IMR-90 (cell line): ENCODE measurements at regions of chr7 and their contacts with region 1.

Region 1: GRCh38 chr7:6340241-6340640 is 67.8 kb upstream of the CYTH3 start:
- DNase-seq: no peak
- ATAC-seq: no peak
- H3K4me3 ChIP-seq: no peak overlapping the region
- H3K27ac ChIP-seq: no peak overlapping the region
- H3K4me1 ChIP-seq: no peaks in the 10 kb centered on the region
- H3K27me3 ChIP-seq: no peaks in the 10 kb centered on the region
- CTCF ChIP-seq: no peak
- POLR2A ChIP-seq: no peak
- RAD21 ChIP-seq: no peak

Region 2: GRCh38 chr7:6260291-6261187 is 79.7 kb before region 1 on chr7:
- CTCF ChIA-PET with region 1: no interaction called
- POLR2A ChIA-PET with region 1: no interaction called
- dilution Hi-C with region 1: no loop called
- in situ Hi-C with region 1: no loop called
- intact Hi-C with region 1: no loop called
- DNase-seq: no peak
- ATAC-seq: peak; percentile 25
- H3K4me3 ChIP-seq: no peak overlapping the region
- H3K27ac ChIP-seq: peak overlapping the region; percentile 58; the same call in 1 of the 2 replicates
- H3K4me1 ChIP-seq: peaks cover 20% of the 10 kb centered on the region
- H3K27me3 ChIP-seq: no peaks in the 10 kb centered on the region
- CTCF ChIP-seq: no peak
- POLR2A ChIP-seq: no peak
- RAD21 ChIP-seq: no peak

Region 3: DNA sequence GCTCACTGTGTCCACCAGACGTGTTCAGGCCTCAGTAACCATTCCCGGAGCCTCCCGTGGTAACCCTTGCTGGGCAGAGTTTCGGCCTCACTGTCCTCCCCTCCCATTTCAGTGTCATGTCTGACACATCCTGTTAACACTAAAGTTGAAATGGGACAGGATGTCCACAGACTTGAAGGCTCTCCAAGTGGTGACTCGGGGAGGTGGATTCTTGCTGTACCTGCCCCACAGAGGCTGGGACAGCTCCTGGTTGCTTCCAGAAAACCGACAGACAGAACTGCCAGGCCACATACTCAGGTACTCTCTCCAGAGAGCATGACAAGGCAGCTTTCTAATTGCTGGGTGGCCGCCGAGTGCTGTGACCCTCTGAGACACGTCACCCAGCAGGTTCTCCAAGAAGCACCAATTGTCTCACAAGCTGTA is 49.9 kb before region 1 on chr7:
- CTCF ChIA-PET with region 1: no interaction called
- POLR2A ChIA-PET with region 1: no interaction called
- dilution Hi-C with region 1: no loop called
- in situ Hi-C with region 1: no loop called
- intact Hi-C with region 1: no loop called
- DNase-seq: peak; percentile 18
- ATAC-seq: peak; percentile 37; the same call in 1 of the 2 replicates
- H3K4me3 ChIP-seq: no peak overlapping the region
- H3K27ac ChIP-seq: no peak overlapping the region
- H3K4me1 ChIP-seq: peaks cover 2% of the 10 kb centered on the region; the same call in 1 of the 2 replicates
- H3K27me3 ChIP-seq: no peaks in the 10 kb centered on the region
- CTCF ChIP-seq: no peak
- POLR2A ChIP-seq: no peak
- RAD21 ChIP-seq: no peak

Region 4: DNA sequence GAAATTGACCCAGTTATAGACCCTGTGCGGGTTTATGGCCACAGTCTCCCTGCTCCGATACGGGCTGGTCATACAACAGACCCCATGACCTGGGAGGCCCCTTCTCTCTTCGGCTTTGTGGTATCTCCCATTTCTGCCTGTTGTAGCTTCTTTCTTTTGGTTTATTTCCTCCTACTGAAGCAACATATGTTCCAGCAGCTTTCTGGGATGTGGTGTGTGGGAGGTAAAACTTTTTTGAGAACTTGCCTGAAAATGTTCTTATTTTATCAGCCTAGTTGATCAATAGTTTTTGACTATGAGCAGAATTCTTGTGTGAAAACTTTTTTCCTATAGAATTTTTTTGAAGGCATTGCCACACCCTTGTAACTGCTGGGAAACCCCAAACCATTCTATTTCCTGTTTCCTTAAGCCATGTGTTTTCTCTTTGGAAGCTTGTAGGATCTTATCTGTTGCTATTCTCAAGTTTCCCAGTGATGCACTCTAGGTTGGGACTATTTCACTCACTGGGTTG is 27.5 kb after region 1 on chr7:
- CTCF ChIA-PET with region 1: no interaction called
- POLR2A ChIA-PET with region 1: interaction called, 13 read pairs
- dilution Hi-C with region 1: no loop called
- in situ Hi-C with region 1: no loop called
- intact Hi-C with region 1: no loop called
- DNase-seq: peak; percentile 77
- ATAC-seq: peak; percentile 75
- H3K4me3 ChIP-seq: no peak overlapping the region
- H3K27ac ChIP-seq: no peak overlapping the region
- H3K4me1 ChIP-seq: peaks cover 2% of the 10 kb centered on the region
- H3K27me3 ChIP-seq: no peaks in the 10 kb centered on the region
- CTCF ChIP-seq: no peak
- POLR2A ChIP-seq: no peak
- RAD21 ChIP-seq: no peak

Region 5: GRCh38 chr7:6435486-6436384 is 95.5 kb after region 1 on chr7:
- CTCF ChIA-PET with region 1: no interaction called
- POLR2A ChIA-PET with region 1: no interaction called
- dilution Hi-C with region 1: no loop called
- in situ Hi-C with region 1: no loop called
- intact Hi-C with region 1: no loop called
- DNase-seq: peak; percentile 78
- ATAC-seq: peak; percentile 95
- H3K4me3 ChIP-seq: no peak overlapping the region
- H3K27ac ChIP-seq: peak overlapping the region; percentile 65
- H3K4me1 ChIP-seq: peaks cover 6% of the 10 kb centered on the region; the same call in 1 of the 2 replicates
- H3K27me3 ChIP-seq: no peaks in the 10 kb centered on the region
- CTCF ChIP-seq: peak; percentile 96
- POLR2A ChIP-seq: no peak
- RAD21 ChIP-seq: peak; percentile 72

Region 6: GRCh38 chr7:6889252-6889812 is 549.1 kb after region 1 on chr7:
- CTCF ChIA-PET with region 1: no interaction called
- POLR2A ChIA-PET with region 1: no interaction called
- dilution Hi-C with region 1: no loop called
- in situ Hi-C with region 1: no loop called
- intact Hi-C with region 1: no loop called
- DNase-seq: no peak
- ATAC-seq: no peak
- H3K4me3 ChIP-seq: no peak overlapping the region
- H3K27ac ChIP-seq: no peak overlapping the region
- H3K4me1 ChIP-seq: no peaks in the 10 kb centered on the region
- H3K27me3 ChIP-seq: no peaks in the 10 kb centered on the region
- CTCF ChIP-seq: no peak
- POLR2A ChIP-seq: no peak
- RAD21 ChIP-seq: no peak